ENCODE measurements at regions of chr18 and their contacts with region 1.

Region 1: DNA sequence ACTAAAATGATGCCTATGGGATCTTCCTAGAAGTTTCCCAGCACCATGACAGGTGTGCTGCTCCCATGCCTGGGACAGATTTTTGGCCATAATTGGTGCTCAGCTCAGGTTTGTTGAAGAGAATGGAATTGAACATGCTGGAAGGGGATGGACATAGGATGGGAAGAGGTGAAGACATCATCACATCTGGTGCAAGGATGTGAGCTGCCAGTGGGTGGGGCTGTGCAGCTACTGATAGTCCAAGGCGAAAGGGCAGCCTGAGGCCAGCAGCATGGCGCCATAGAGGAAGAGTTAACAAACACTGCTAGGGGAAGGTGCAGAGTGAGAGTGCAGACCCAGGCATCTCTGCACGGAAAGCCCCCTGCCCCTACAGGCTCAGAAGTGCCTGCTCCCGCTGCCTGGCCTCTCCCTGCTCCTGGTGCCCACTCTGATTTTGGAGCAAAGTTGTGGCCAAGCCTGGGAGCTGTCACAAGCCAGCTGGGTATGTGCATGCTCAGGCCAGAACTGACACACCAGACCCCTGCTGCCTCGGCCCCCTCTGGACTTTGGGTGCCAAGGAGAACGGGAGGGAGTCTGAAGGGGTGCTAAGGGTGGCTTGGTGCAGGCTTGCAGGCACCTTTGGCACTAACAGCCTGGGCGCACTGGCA is 178.6 kb downstream of the ZBTB7C start:
- DNase-seq: peak; percentile 61
- H3K4me3 ChIP-seq: no peak overlapping the region
- H3K27ac ChIP-seq: no peak overlapping the region
- H3K4me1 ChIP-seq: peaks cover 41% of the 10 kb centered on the region
- H3K27me3 ChIP-seq: no peaks in the 10 kb centered on the region
- CTCF ChIP-seq: peak; percentile 82 to 85

Region 2: GRCh38 chr18:48022531-48023329 is 207.9 kb before region 1 on chr18:
- CTCF ChIA-PET with region 1: no interaction called
- dilution Hi-C with region 1: no loop called
- in situ Hi-C with region 1: no loop called
- intact Hi-C with region 1: loop called (anchors 1 kb)
- DNase-seq: peak; percentile 67
- H3K4me3 ChIP-seq: no peak overlapping the region
- H3K27ac ChIP-seq: peak overlapping the region; percentile 33
- H3K4me1 ChIP-seq: peaks cover 29% of the 10 kb centered on the region
- H3K27me3 ChIP-seq: no peaks in the 10 kb centered on the region
- CTCF ChIP-seq: peak; percentile 58 to 70

Region 3: GRCh38 chr18:48330403-48331022 is 99.9 kb after region 1 on chr18:
- CTCF ChIA-PET with region 1: no interaction called
- dilution Hi-C with region 1: loop called (anchors 5 kb)
- in situ Hi-C with region 1: loop called in 1 of 2 experiments (anchors 10 kb)
- intact Hi-C with region 1: no loop called
- DNase-seq: peak; percentile 95
- H3K4me3 ChIP-seq: no peak overlapping the region
- H3K27ac ChIP-seq: peak overlapping the region; percentile 91
- H3K4me1 ChIP-seq: peaks cover 46% of the 10 kb centered on the region
- H3K27me3 ChIP-seq: no peaks in the 10 kb centered on the region
- CTCF ChIP-seq: no peak

Region 4: GRCh38 chr18:48345596-48345995 is 115.0 kb after region 1 on chr18:
- CTCF ChIA-PET with region 1: no interaction called
- dilution Hi-C with region 1: no loop called
- in situ Hi-C with region 1: loop called in 1 of 2 experiments (anchors 10 kb)
- intact Hi-C with region 1: loop called (anchors 1 kb)
- DNase-seq: no peak
- H3K4me3 ChIP-seq: no peak overlapping the region
- H3K27ac ChIP-seq: no peak overlapping the region
- H3K4me1 ChIP-seq: peaks cover 11% of the 10 kb centered on the region
- H3K27me3 ChIP-seq: no peaks in the 10 kb centered on the region
- CTCF ChIP-seq: peak; percentile 45 to 67

Region 5: GRCh38 chr18:48455555-48456478 is 225.2 kb after region 1 on chr18:
- CTCF ChIA-PET with region 1: no interaction called
- dilution Hi-C with region 1: no loop called
- in situ Hi-C with region 1: loop called in 1 of 2 experiments (anchors 10 kb)
- intact Hi-C with region 1: no loop called
- DNase-seq: peak; percentile 100
- H3K4me3 ChIP-seq: no peak overlapping the region
- H3K27ac ChIP-seq: peak overlapping the region; percentile 80
- H3K4me1 ChIP-seq: peaks cover 58% of the 10 kb centered on the region
- H3K27me3 ChIP-seq: no peaks in the 10 kb centered on the region
- CTCF ChIP-seq: no peak

Measured in mammary epithelial cell (primary cell).